ENCODE measurements at regions of chr1 and their contacts with region 1.

Region 1: DNA sequence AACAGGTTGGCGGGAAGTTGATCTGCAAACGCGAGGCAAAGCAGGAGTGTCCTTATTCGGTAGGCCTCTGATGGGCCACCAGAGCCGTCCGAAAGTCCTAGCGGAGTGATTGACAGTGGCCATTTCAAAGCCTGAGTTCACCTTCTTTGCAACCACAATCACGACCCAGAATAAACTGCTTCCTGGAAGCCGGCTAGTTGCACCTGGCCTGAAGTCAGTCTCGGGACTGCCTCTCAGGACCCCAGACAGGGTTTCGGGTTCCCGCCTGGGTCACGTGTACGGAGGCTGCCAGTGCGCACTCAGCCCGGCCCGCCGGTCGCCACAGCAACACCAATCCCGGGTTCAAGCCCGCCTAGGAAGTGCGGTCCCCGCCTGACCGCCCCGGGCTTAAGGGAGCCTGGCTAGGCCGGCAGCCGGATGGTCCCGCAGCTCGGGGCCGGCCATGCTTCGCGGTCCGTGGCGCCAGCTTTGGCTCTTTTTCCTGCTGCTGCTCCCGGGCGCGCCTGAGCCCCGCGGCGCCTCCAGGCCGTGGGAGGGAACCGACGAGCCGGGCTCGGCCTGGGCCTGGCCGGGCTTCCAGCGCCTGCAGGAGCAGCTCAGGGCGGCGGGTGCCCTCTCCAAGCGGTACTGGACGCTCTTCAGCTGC is at the start of gene TOR3A:
- DNase-seq: peak; percentile 96
- ATAC-seq: peak; percentile 82
- H3K4me3 ChIP-seq: peak within 1 kb of the TSS; percentile 72 to 95 (median 87)
- H3K4me3 Mint-ChIP-seq: peak within 1 kb of the TSS; percentile 98
- H3K27ac ChIP-seq: peak within 1 kb of the TSS; percentile 94 to 95
- H3K27ac Mint-ChIP-seq: peak within 1 kb of the TSS; percentile 97
- H3K4me1 ChIP-seq: peaks cover 24 to 38% of the 10 kb centered on the region in 2 donors
- H3K4me1 Mint-ChIP-seq: peaks cover 49% of the 10 kb centered on the region
- H3K27me3 ChIP-seq: no peaks in the 10 kb centered on the region
- H3K27me3 Mint-ChIP-seq: no peaks in the 10 kb centered on the region
- CTCF ChIP-seq: no peak
- total RNA-seq, gene TOR3A: 49.1 and 49.9 TPM in 2 replicates

Region 2: DNA sequence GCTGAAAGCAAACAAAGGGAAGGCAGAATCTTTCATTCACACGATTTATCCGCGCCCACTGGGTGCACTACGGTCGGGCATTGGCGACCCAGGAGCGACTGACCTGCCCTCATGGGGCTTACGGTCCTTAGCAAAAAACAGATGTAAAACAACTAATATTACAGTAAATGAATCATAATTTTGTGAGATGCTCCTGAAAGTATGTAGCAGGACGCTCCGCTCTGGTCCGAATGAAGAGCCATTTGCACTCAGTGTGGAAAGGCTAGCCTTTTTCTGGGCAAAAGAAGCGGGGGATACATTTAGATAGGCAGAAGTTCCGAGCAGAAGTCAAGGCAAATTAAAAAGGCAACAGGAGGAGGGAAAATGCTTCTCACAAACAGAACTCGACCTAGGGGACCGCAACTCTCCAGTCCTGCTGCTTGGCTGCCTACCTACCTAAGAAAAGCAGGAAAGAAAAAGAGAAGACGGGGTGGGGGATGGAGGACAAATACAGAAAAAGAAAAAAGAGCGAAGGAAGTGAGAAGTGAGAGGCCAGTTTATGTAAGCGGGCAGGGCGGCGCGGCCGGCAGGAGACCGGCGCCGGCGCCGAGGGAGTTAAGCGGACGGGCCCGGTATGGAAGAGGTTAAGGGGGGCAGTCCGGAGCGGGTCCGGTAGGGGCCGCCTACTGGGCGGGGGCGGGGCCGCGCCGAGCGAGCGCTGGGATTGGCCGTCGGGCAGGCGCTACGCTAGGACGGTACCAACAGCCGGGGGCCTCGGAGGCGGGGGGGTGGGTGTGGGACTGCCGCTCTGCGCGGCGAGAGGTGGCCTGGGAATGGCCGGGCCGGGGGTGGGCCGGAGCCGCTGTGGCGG is 56.5 kb before region 1 on chr1 and contains the start of gene FAM20B:
- CTCF ChIA-PET with region 1: interaction called, 4 read pairs
- POLR2A ChIA-PET with region 1: interaction called, 7 read pairs
- intact Hi-C with region 1: loop called (anchors 1 kb)
- DNase-seq: peak; percentile 95
- ATAC-seq: peak; percentile 80
- H3K4me3 ChIP-seq: peak within 1 kb of the TSS; percentile 77 to 97 (median 87)
- H3K4me3 Mint-ChIP-seq: peak within 1 kb of the TSS; percentile 97
- H3K27ac ChIP-seq: peak within 1 kb of the TSS; percentile 92 to 95
- H3K27ac Mint-ChIP-seq: peak within 1 kb of the TSS; percentile 95
- H3K4me1 ChIP-seq: peaks cover 29 to 36% of the 10 kb centered on the region in 2 donors
- H3K4me1 Mint-ChIP-seq: peaks cover 45% of the 10 kb centered on the region
- H3K27me3 ChIP-seq: no peaks in the 10 kb centered on the region
- H3K27me3 Mint-ChIP-seq: no peaks in the 10 kb centered on the region
- CTCF ChIP-seq: no peak
- total RNA-seq, gene FAM20B: 28.5 and 32.8 TPM in 2 replicates

Region 3: DNA sequence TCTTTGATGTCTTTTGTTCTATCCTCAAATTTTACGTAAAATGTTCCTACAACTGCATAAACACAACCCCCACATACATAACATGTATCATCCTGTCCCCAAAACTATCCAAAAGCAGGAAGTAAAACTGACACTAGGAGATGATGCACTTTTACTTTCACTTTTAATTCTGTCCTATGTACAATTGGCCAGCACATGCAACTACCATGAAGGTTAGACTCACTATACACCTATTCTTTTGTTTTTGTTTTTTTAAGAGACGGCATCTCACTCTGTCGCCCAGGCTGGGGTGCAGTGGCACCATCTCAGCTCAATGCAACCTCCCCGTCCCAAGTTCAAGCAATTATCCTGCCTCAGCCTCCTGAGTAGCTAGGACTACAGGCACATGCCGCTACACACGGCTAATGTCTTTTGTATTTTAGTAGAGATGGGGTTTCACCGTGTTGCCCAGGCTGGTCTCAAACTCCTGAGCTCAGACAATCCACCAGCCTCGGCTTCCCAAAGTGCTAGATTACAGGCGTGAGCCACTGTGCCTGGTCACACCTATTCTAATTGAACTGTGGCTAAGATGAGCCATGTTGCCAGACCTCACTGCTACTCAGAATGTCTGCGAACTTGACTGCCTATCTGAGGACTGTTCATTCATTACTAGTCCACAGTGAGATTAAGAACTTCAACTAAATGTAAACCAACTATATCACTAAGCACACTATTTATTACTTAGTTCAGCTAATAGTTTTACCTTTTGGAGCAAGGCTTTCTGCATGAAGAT is 48.1 kb after region 1 on chr1:
- CTCF ChIA-PET with region 1: interaction called, 4 read pairs
- POLR2A ChIA-PET with region 1: no interaction called
- intact Hi-C with region 1: loop called (anchors 1 kb)
- DNase-seq: peak; percentile 79
- ATAC-seq: peak; percentile 96
- H3K4me3 ChIP-seq: peak overlapping the region in 3 of 5 experiments; percentile 10 to 42 (median 13)
- H3K4me3 Mint-ChIP-seq: peak overlapping the region; percentile 35
- H3K27ac ChIP-seq: peak overlapping the region; percentile 78 to 83
- H3K27ac Mint-ChIP-seq: peak overlapping the region; percentile 75
- H3K4me1 ChIP-seq: peaks cover 12 to 13% of the 10 kb centered on the region in 2 donors
- H3K4me1 Mint-ChIP-seq: peaks cover 16% of the 10 kb centered on the region
- H3K27me3 ChIP-seq: no peaks in the 10 kb centered on the region
- H3K27me3 Mint-ChIP-seq: no peaks in the 10 kb centered on the region
- CTCF ChIP-seq: no peak

Region 4: GRCh38 chr1:179293340-179294327 is 211.8 kb after region 1 on chr1 and contains the start of gene SOAT1:
- CTCF ChIA-PET with region 1: interaction called, 24 read pairs
- POLR2A ChIA-PET with region 1: interaction called, 7 read pairs
- intact Hi-C with region 1: loop called (anchors 1 kb)
- DNase-seq: peak; percentile 93
- ATAC-seq: peak; percentile 99
- H3K4me3 ChIP-seq: peak within 1 kb of the TSS; percentile 89 to 99 (median 92)
- H3K4me3 Mint-ChIP-seq: peak within 1 kb of the TSS; percentile 93
- H3K27ac ChIP-seq: peak within 1 kb of the TSS; percentile 79 to 84
- H3K27ac Mint-ChIP-seq: peak within 1 kb of the TSS; percentile 82
- H3K4me1 ChIP-seq: peaks cover 27 to 39% of the 10 kb centered on the region in 2 donors
- H3K4me1 Mint-ChIP-seq: peaks cover 42% of the 10 kb centered on the region
- H3K27me3 ChIP-seq: no peaks in the 10 kb centered on the region
- H3K27me3 Mint-ChIP-seq: no peaks in the 10 kb centered on the region
- CTCF ChIP-seq: peak; percentile 31
- total RNA-seq, gene SOAT1: 25.1 and 27.1 TPM in 2 replicates

Region 5: GRCh38 chr1:179599623-179600249 is 517.9 kb after region 1 on chr1:
- CTCF ChIA-PET with region 1: interaction called, 14 read pairs
- POLR2A ChIA-PET with region 1: no interaction called
- intact Hi-C with region 1: no loop called
- DNase-seq: peak; percentile 21
- ATAC-seq: no peak
- H3K4me3 ChIP-seq: no peak overlapping the region
- H3K4me3 Mint-ChIP-seq: no peak overlapping the region
- H3K27ac ChIP-seq: no peak overlapping the region
- H3K27ac Mint-ChIP-seq: no peak overlapping the region
- H3K4me1 ChIP-seq: no peaks in the 10 kb centered on the region
- H3K4me1 Mint-ChIP-seq: no peaks in the 10 kb centered on the region
- H3K27me3 ChIP-seq: no peaks in the 10 kb centered on the region
- H3K27me3 Mint-ChIP-seq: peaks cover 27% of the 10 kb centered on the region
- CTCF ChIP-seq: peak; percentile 11

Measured in B cell (primary cell).